OCI-LY7 (cell line): ENCODE measurements at regions of chr9 and their contacts with region 1.

Region 1: DNA sequence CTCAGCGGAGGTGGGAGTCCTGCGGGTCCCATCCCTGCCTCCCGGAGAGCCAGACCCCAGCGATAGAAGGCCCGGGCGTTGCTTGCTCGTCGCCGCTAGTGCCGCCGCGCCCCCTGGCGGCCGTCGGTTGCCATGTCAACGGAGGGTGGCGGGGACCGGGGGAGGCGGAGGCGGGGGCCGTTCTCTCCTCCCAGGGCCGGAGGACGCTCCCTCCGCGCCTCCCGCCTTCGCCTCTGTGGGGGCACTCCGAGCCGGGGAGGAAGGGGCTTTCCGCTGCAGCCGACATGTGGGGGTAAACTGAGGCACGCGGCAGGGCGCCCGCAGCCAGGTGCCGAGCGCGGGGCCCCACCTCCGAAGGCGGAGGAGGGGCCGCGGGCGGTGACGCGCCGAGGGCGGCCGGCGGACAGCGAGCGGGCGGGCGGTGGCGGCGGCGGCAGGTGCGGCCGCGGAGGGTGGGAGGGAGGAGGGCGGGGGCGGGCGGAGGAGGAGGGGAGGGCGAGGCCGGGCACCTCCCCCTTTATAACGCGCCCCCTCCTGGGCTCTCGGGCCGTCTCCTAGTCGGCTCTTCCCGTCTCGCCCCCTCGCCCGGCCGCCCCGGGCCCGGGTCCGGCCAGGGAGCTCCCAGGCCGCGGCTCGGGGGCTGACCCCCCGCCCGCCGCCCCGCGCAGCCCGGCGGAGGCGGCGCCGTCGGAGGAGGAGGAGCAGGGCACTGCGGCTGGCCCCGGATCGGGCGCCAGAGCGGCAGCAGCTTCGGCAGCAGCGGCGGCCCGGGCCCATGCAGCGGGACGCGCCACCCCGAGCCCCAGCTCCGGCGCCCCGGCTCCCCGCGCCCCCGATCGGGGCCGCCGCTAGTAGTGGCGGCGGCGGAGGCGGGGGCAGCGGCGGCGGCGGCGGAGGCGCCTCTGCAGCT is 556 bp upstream of the CDK9 start:
- DNase-seq: peak; percentile 89
- H3K4me3 ChIP-seq: peak overlapping the region; percentile 88
- H3K27ac ChIP-seq: peak overlapping the region; percentile 89
- H3K4me1 ChIP-seq: peaks cover 56% of the 10 kb centered on the region
- CTCF ChIP-seq: peak; percentile 89

Region 2: DNA sequence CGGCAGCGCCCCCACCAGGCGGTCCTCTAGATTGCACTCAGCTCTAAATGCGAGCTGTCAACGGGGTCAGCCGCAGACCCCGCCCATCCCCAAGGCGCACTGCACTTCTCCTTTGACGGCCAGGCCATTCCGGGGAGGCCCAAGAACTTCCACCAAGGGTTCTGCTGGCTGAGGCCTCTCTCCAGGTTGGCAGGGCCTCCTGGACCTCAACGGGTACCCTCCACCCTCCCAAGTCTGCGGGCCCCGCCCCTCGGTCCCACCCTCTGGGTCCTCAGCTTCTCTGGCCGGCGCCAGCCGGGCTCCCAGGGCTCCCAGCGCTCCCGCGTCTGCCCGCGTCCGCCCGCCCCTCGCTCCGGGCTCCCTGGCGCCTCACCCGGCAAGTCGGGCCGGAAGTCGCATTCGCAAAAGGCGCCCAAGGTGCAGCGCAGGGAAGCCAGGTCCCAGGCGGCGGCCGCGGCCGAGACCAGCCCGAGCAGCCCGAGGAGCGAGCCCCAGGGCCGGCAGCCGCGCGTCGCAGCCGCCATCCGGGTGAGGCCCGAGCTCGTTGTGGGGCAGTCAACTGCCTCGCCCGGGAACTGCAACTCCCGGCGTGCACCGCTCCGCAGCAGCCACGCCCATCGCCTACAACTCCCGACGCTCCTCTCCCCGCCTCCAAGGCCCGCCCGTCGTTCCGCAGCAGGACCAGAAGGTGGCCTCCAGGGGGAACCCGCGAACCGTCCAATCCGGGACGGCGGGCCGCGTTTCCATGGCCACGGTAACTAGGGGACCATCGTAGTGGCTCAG is 50.3 kb before region 1 on chr9 and contains the start of gene TOR2A:
- CTCF ChIA-PET with region 1: interaction called, 6 read pairs
- POLR2A ChIA-PET with region 1: interaction called, 4 read pairs
- intact Hi-C with region 1: loop called (anchors 1 kb)
- DNase-seq: peak; percentile 97
- H3K4me3 ChIP-seq: peak within 1 kb of the TSS; percentile 75
- H3K27ac ChIP-seq: peak within 1 kb of the TSS; percentile 69
- H3K4me1 ChIP-seq: peaks cover 19% of the 10 kb centered on the region
- CTCF ChIP-seq: peak; percentile 93
- total RNA-seq, gene TOR2A: 8.9 and 13.9 TPM in 2 replicates

Region 3: DNA sequence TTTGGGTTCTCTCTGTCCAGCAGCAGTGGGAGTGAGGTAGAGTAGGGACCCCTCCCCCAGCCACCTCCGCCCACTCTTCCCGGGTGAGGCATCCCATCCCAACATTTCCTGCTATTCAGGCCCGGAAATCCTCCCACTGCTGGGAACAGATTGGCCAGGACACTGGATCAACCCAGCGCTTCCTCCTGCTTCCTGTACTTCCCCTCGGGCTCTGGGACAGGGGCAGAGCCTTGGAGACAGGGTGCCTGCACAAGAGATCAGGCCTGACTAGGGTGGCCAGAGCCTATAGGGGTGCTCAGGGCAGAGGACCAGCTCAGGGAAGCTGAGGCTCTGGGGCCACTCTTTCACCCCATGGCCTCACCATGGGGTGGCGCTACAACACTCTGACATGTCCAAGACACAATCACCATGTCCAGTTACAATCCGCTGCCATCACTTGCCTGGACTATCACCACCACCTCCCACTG is 21.3 kb before region 1 on chr9:
- CTCF ChIA-PET with region 1: interaction called, 3 read pairs
- POLR2A ChIA-PET with region 1: no interaction called
- intact Hi-C with region 1: loop called (anchors 1 kb)
- DNase-seq: peak; percentile 51
- H3K4me3 ChIP-seq: no peak overlapping the region
- H3K27ac ChIP-seq: no peak overlapping the region
- H3K4me1 ChIP-seq: peaks cover 14% of the 10 kb centered on the region
- CTCF ChIP-seq: peak; percentile 67

Region 4: GRCh38 chr9:127802576-127803443 is 17.5 kb after region 1 on chr9 and contains the start of gene FPGS:
- CTCF ChIA-PET with region 1: no interaction called
- POLR2A ChIA-PET with region 1: interaction called, 4 read pairs
- intact Hi-C with region 1: loop called (anchors 2 kb)
- DNase-seq: peak; percentile 92
- H3K4me3 ChIP-seq: peak within 1 kb of the TSS; percentile 98
- H3K27ac ChIP-seq: peak within 1 kb of the TSS; percentile 78
- H3K4me1 ChIP-seq: peaks cover 47% of the 10 kb centered on the region
- CTCF ChIP-seq: no peak
- total RNA-seq, gene FPGS: 136 and 147 TPM in 2 replicates

Region 5: GRCh38 chr9:128043467-128043868 is 258.2 kb after region 1 on chr9:
- CTCF ChIA-PET with region 1: no interaction called
- POLR2A ChIA-PET with region 1: no interaction called
- intact Hi-C with region 1: no loop called
- DNase-seq: no peak
- H3K4me3 ChIP-seq: no peak overlapping the region
- H3K27ac ChIP-seq: no peak overlapping the region
- H3K4me1 ChIP-seq: no peaks in the 10 kb centered on the region
- CTCF ChIP-seq: no peak